CD8-positive, alpha-beta memory T cell (primary cell): ENCODE measurements at regions of chr6 and their contacts with region 1.

Region 1: GRCh38 chr6:34774967-34775366 is 16.9 kb upstream of the BLTP3A start:
- DNase-seq: no peak
- H3K4me3 ChIP-seq: no peak overlapping the region
- H3K4me3 Mint-ChIP-seq: no peak overlapping the region
- H3K27ac ChIP-seq: no peak overlapping the region
- H3K27ac Mint-ChIP-seq: no peak overlapping the region
- H3K4me1 ChIP-seq: no peaks in the 10 kb centered on the region
- H3K4me1 Mint-ChIP-seq: peaks cover 5 to 23% (median 18%) of the 10 kb centered on the region in 3 donors
- H3K27me3 ChIP-seq: no peaks in the 10 kb centered on the region
- H3K27me3 Mint-ChIP-seq: no peaks in the 10 kb centered on the region

Region 2: GRCh38 chr6:34642427-34642826 is 132.5 kb before region 1 on chr6:
- CTCF ChIA-PET with region 1: no interaction called
- POLR2A ChIA-PET with region 1: interaction called, 15 read pairs
- DNase-seq: no peak
- H3K4me3 ChIP-seq: no peak overlapping the region
- H3K4me3 Mint-ChIP-seq: no peak overlapping the region
- H3K27ac ChIP-seq: no peak overlapping the region
- H3K27ac Mint-ChIP-seq: peak overlapping the region in 2 of 8 donors; percentile 29 to 43
- H3K4me1 ChIP-seq: no peaks in the 10 kb centered on the region
- H3K4me1 Mint-ChIP-seq: peaks cover 29 to 60% (median 38%) of the 10 kb centered on the region in 3 donors
- H3K27me3 ChIP-seq: no peaks in the 10 kb centered on the region
- H3K27me3 Mint-ChIP-seq: no peaks in the 10 kb centered on the region